ENCODE measurements at regions of chr17 and their contacts with region 1.

Region 1: GRCh38 chr17:60435244-60436167 is 13.2 kb downstream of the CHCT1 start:
- DNase-seq: peak; percentile 77
- H3K4me3 Mint-ChIP-seq: no peak overlapping the region
- H3K27ac Mint-ChIP-seq: no peak overlapping the region
- H3K4me1 Mint-ChIP-seq: no peaks in the 10 kb centered on the region
- H3K27me3 Mint-ChIP-seq: no peaks in the 10 kb centered on the region

Region 2: GRCh38 chr17:60036796-60037612 is 398.5 kb before region 1 on chr17:
- CTCF ChIA-PET with region 1: interaction called, 3 read pairs
- intact Hi-C with region 1: loop called (anchors 5 kb)
- DNase-seq: peak; percentile 75
- H3K4me3 Mint-ChIP-seq: no peak overlapping the region
- H3K27ac Mint-ChIP-seq: no peak overlapping the region
- H3K4me1 Mint-ChIP-seq: peaks cover 4% of the 10 kb centered on the region
- H3K27me3 Mint-ChIP-seq: peaks cover 17% of the 10 kb centered on the region

Region 3: GRCh38 chr17:60142872-60143499 is 292.5 kb before region 1 on chr17:
- CTCF ChIA-PET with region 1: interaction called, 6 read pairs
- intact Hi-C with region 1: loop called (anchors 1 kb)
- DNase-seq: peak; percentile 93
- H3K4me3 Mint-ChIP-seq: peak overlapping the region; percentile 22
- H3K27ac Mint-ChIP-seq: no peak overlapping the region
- H3K4me1 Mint-ChIP-seq: peaks cover 20% of the 10 kb centered on the region
- H3K27me3 Mint-ChIP-seq: peaks cover 91% of the 10 kb centered on the region

Region 4: GRCh38 chr17:60231234-60231633 is 204.3 kb before region 1 on chr17:
- CTCF ChIA-PET with region 1: interaction called, 4 read pairs
- intact Hi-C with region 1: loop called (anchors 1 kb)
- DNase-seq: no peak
- H3K4me3 Mint-ChIP-seq: no peak overlapping the region
- H3K27ac Mint-ChIP-seq: no peak overlapping the region
- H3K4me1 Mint-ChIP-seq: peaks cover 6% of the 10 kb centered on the region
- H3K27me3 Mint-ChIP-seq: no peaks in the 10 kb centered on the region

Region 5: GRCh38 chr17:60421273-60421934 is 14.1 kb before region 1 on chr17:
- CTCF ChIA-PET with region 1: no interaction called
- intact Hi-C with region 1: loop called (anchors 2 kb)
- DNase-seq: peak; percentile 84
- H3K4me3 Mint-ChIP-seq: peak overlapping the region; percentile 73
- H3K27ac Mint-ChIP-seq: no peak overlapping the region
- H3K4me1 Mint-ChIP-seq: peaks cover 8% of the 10 kb centered on the region
- H3K27me3 Mint-ChIP-seq: no peaks in the 10 kb centered on the region

Region 6: DNA sequence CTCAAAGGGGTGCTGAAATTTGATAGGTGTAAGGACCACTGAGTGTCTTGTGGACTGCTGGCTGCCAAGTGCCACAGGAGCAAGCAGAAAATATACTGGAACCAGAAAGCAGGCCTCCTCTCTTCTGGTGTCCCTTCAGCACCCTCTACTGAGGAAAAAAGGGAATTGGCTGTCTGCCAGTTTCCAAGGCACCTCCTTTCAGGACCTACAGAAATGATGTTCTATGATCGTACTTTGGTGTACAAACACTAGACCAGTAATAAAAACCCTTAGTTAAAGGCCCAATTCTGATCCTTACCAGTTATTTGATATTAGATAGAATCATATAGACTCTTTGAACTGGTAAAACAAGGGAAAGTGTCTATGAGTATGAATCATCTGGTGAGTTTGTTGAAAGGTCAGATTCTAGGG is 206.3 kb after region 1 on chr17:
- CTCF ChIA-PET with region 1: interaction called, 5 read pairs
- intact Hi-C with region 1: loop called (anchors 5 kb)
- DNase-seq: peak; percentile 74
- H3K4me3 Mint-ChIP-seq: no peak overlapping the region
- H3K27ac Mint-ChIP-seq: no peak overlapping the region
- H3K4me1 Mint-ChIP-seq: peaks cover 13% of the 10 kb centered on the region
- H3K27me3 Mint-ChIP-seq: no peaks in the 10 kb centered on the region

Region 7: GRCh38 chr17:61015966-61016365 is 580.5 kb after region 1 on chr17:
- CTCF ChIA-PET with region 1: interaction called, 10 read pairs
- intact Hi-C with region 1: no loop called
- DNase-seq: no peak
- H3K4me3 Mint-ChIP-seq: no peak overlapping the region
- H3K27ac Mint-ChIP-seq: no peak overlapping the region
- H3K4me1 Mint-ChIP-seq: no peaks in the 10 kb centered on the region
- H3K27me3 Mint-ChIP-seq: no peaks in the 10 kb centered on the region